Gastrocnemius medialis (tissue), 4 donors: ENCODE measurements at regions of chr19 and their contacts with region 1.

Region 1: GRCh38 chr19:47225746-47226425 is 5.1 kb downstream of the BBC3 start:
- DNase-seq: peak; percentile 70 to 87
- ATAC-seq: peak; percentile 43 to 54
- H3K4me3 ChIP-seq: peak overlapping the region; percentile 72 to 100 (median 86)
- H3K27ac ChIP-seq: peak overlapping the region; percentile 98 to 100 (median 100)
- H3K4me1 ChIP-seq: peaks cover 26% of the 10 kb centered on the region in 2 donors
- H3K27me3 ChIP-seq: no peaks in the 10 kb centered on the region
- CTCF ChIP-seq: peak; percentile 27 to 77 (median 61)
- POLR2A ChIP-seq: peak; percentile 100

Region 2: GRCh38 chr19:46975925-46976782 is 249.7 kb before region 1 on chr19:
- in situ Hi-C with region 1: no loop called
- intact Hi-C with region 1: loop called (anchors 5 kb)
- DNase-seq: peak; percentile 97 to 100
- ATAC-seq: peak; percentile 86 to 88
- H3K4me3 ChIP-seq: peak overlapping the region in 2 of 4 donors; percentile 5 to 28
- H3K27ac ChIP-seq: peak overlapping the region; percentile 90 to 97 (median 93)
- H3K4me1 ChIP-seq: peaks cover 71 to 82% of the 10 kb centered on the region in 2 donors
- H3K27me3 ChIP-seq: no peaks in the 10 kb centered on the region
- CTCF ChIP-seq: no peak
- POLR2A ChIP-seq: peak; percentile 51 to 55

Region 3: DNA sequence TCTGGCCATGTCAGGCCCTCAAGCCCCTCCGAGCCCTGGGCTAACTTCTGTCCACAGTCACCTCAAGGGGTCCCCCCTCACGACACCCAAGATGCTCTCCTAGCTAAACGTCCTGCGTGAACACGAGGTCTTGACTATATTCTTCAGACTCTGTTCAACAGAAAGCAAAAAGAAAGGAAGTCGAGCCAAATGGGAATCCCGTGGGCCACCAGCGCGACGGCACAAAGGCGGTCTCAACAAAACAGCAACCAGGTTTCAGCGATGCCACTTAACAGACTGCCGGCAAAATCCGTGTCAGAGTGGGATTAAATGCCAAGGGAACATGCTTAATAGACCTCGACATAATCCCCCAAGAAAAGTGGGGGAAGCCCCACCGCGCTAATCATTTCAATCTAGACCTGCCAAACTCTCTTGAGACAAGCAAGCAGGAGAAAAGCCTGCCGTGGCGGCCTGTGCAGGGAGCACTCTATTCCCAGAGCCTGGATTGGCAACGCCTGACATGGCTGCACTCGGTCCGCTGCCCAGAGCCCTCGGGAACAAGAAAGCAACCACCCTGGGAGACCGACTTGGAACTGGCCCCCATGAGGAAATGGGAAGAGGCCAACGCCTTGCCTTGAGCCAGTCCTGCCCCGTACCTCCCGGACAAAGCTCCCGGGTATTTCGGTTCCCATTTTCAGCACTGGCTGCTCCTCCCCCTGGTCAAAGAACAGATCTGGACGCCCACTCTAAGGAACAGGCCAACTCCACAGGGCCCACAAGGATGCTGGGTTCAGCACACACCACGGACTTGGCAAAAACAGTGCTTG is 128.3 kb before region 1 on chr19:
- in situ Hi-C with region 1: no loop called
- intact Hi-C with region 1: no loop called
- DNase-seq: peak; percentile 56 to 79
- ATAC-seq: peak; percentile 53 to 65
- H3K4me3 ChIP-seq: peak overlapping the region; percentile 27 to 50 (median 38)
- H3K27ac ChIP-seq: peak overlapping the region; percentile 79 to 87 (median 84)
- H3K4me1 ChIP-seq: peaks cover 69 to 78% of the 10 kb centered on the region in 2 donors
- H3K27me3 ChIP-seq: no peaks in the 10 kb centered on the region
- CTCF ChIP-seq: no peak
- POLR2A ChIP-seq: no peak

Region 4: DNA sequence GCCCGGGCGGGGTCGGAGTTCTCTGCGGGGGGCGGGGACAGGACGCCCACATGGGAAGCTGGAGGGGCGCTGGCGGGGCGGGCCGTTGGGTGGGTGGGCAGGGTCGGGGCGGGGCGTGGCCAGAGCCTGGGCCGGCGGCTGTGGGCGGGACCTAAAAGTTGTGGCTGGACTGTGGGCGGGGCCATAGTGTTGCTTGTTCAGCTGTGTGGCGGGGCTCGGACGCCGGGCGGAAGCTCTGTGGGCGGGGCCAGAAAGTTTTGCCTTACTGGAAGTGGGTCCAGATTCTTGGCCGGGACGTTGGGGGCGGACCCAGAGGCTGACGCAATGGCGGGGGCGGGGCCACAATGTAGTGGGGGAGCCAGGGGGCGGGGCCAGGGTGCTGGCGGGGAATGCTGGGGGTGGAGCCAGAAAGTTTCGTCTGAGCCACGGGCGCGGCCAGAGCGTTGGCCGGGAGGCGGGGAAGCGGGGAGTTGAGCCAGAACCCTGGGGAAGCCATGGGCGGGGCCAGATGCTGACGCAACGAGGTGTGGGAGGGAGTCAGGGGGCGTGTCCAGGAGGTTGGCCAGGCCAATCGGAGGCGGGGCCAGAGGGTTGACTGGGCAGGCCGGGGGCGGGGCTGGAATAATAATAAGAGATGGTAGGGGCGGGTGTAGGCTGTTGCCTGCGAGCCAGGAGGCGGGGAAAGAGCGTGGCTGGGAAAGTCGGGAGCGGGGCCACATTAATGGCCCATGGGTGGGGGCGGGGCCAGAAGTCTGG is 31.0 kb after region 1 on chr19:
- in situ Hi-C with region 1: no loop called
- intact Hi-C with region 1: loop called (anchors 1 kb)
- DNase-seq: peak; percentile 100
- ATAC-seq: peak; percentile 78 to 84
- H3K4me3 ChIP-seq: peak overlapping the region; percentile 50 to 72 (median 70)
- H3K27ac ChIP-seq: peak overlapping the region; percentile 82 to 95 (median 91)
- H3K4me1 ChIP-seq: peaks cover 16% of the 10 kb centered on the region in 2 donors
- H3K27me3 ChIP-seq: no peaks in the 10 kb centered on the region
- CTCF ChIP-seq: no peak
- POLR2A ChIP-seq: no peak